ENCODE measurements at regions of chr9 and their contacts with region 1.

Region 1: DNA sequence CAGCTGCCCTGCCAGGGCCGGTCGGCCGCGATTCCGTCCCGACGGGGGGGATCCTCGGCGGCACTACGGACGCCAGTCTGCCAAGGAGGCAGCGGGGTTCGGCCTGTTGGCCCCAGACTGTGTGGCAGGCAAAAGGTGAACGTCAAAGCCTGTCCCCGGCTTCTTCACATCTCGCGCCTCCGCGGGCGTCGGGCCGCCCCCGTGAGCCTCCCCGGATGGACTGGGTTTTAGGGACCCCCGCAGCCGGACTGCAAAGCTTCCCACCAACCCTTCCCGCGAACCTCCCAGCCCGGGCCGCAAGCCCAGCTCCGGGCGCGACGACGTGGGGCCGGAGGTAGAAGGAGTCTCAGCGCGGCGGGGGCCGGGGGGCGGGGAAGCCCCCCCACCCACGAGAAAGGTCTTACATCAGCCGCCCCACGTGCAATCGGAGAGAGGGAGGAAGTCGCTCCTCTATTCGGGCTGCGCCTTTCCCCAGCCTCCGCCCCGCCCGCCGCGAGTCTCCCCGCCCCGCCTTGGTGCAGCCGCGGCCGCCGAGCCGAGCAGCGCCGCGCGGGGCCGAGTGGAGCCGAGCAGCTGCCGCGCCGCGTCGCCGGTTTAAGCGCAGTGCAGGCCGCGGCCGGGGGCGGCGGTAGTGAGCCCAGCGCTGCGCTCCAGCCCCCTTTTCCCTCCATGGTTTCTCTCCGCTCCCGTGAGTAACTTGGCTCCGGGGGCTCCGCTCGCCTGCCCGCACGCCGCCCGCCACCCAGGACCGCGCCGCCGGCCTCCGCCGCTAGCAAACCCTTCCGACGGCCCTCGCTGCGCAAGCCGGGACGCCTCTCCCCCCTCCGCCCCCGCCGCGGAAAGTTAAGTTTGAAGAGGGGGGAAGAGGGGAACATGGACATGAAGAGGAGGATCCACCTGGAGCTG is at the start of gene ANP32B:
- DNase-seq: peak; percentile 96
- H3K4me3 ChIP-seq: peak within 1 kb of the TSS; percentile 92
- H3K27ac ChIP-seq: peak within 1 kb of the TSS; percentile 85
- H3K4me1 ChIP-seq: peaks cover 66% of the 10 kb centered on the region
- CTCF ChIP-seq: peak; percentile 72
- total RNA-seq, gene ANP32B: 32.1 and 52.7 TPM in 2 replicates

Region 2: DNA sequence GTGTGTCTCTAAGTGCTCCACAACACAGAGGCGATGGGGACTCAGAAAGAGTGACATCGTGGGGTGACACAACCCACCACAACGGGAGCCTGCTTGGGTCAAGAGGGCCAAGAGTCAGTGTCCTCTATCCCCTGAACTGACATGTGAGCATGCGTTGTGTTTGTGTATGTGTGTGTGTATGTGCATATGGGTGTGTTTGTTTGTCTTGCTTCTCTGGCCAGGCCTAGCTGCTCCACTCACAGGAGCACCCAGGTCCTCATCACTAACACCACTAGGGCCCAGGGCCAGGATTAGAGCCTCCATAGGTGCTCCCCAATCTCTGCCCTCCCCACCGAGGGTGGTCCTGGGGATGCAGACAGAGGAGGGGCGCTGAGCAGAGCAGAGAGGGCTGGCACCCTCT is 829.0 kb before region 1 on chr9:
- CTCF ChIA-PET with region 1: no interaction called
- POLR2A ChIA-PET with region 1: no interaction called
- intact Hi-C with region 1: no loop called
- DNase-seq: no peak
- H3K4me3 ChIP-seq: no peak overlapping the region
- H3K27ac ChIP-seq: no peak overlapping the region
- H3K4me1 ChIP-seq: no peaks in the 10 kb centered on the region
- CTCF ChIP-seq: no peak

Region 3: GRCh38 chr9:97880336-97880735 is 102.6 kb before region 1 on chr9:
- CTCF ChIA-PET with region 1: no interaction called
- POLR2A ChIA-PET with region 1: no interaction called
- intact Hi-C with region 1: no loop called
- DNase-seq: no peak
- H3K4me3 ChIP-seq: no peak overlapping the region
- H3K27ac ChIP-seq: no peak overlapping the region
- H3K4me1 ChIP-seq: no peaks in the 10 kb centered on the region
- CTCF ChIP-seq: no peak

Region 4: DNA sequence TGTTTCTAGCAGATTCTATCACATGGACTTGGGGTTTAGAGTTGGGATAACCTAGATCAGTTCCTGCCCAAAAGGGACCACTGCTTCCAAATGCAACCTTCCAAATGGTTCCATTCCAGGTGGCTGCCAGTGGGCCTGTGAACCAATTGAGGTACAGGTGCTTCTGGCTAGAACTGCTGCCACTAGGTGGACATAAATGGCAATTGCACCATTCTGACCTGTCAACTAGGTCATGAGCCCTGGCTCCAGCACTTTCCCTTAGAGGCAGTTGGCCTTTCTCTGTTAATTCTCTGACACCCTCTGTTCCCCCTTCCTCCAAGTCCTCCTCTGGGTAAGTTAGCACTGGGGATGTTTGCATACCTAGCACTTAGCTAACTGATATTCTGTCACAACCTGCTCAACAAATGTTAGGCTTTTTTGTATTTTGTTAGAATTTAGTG is 28.4 kb before region 1 on chr9:
- CTCF ChIA-PET with region 1: interaction called, 3 read pairs
- POLR2A ChIA-PET with region 1: interaction called, 5 read pairs
- intact Hi-C with region 1: loop called (anchors 1 kb)
- DNase-seq: peak; percentile 90
- H3K4me3 ChIP-seq: no peak overlapping the region
- H3K27ac ChIP-seq: peak overlapping the region; percentile 7
- H3K4me1 ChIP-seq: peaks cover 26% of the 10 kb centered on the region
- CTCF ChIP-seq: peak; percentile 93

Region 5: DNA sequence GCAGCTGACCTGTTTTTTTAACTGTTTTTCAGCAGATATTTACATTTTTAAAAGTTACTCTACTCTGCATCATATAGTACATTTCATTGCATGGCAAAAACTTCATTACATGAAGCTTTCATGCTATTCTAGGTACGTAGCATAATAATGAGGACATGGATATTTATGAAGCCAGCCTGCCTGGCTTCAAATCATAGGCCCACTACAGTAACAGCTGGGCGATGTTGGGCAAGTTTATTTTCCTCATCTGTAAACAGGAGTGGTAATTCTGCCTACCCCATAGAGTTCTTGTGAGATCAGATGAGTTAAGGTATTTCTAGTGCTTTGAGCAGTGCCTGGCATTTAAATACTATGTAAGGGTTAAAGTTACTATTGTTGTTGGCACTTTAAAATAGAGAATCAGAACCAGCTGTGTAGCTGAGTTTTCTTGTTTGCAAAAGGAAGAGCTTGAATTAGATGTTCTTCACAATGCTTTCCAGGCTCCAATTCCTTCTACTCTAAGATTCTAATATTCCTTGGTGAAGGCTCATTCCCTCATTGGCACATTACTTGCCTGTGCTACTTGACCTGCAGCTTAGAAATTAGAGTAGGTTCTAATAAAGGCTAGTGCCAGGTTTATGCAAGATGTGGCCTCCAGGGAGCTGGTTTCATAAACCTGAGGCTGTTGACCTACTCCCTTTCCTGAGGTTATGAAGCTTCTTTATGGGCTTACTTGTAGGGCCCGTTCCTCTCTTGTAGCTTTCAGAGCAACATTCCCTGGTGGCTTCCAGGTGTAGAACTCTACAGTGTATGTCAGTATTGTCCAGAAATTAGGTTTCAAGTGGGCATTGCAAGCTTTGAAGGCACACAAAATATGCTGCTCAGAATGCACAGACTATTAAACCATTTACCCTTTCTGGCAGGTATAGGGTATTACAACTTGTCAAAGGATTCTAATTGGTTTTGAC is 14.7 kb after region 1 on chr9:
- CTCF ChIA-PET with region 1: no interaction called
- POLR2A ChIA-PET with region 1: interaction called, 10 read pairs
- intact Hi-C with region 1: no loop called
- DNase-seq: no peak
- H3K4me3 ChIP-seq: no peak overlapping the region
- H3K27ac ChIP-seq: no peak overlapping the region
- H3K4me1 ChIP-seq: peaks cover 10% of the 10 kb centered on the region
- CTCF ChIP-seq: no peak

Region 6: DNA sequence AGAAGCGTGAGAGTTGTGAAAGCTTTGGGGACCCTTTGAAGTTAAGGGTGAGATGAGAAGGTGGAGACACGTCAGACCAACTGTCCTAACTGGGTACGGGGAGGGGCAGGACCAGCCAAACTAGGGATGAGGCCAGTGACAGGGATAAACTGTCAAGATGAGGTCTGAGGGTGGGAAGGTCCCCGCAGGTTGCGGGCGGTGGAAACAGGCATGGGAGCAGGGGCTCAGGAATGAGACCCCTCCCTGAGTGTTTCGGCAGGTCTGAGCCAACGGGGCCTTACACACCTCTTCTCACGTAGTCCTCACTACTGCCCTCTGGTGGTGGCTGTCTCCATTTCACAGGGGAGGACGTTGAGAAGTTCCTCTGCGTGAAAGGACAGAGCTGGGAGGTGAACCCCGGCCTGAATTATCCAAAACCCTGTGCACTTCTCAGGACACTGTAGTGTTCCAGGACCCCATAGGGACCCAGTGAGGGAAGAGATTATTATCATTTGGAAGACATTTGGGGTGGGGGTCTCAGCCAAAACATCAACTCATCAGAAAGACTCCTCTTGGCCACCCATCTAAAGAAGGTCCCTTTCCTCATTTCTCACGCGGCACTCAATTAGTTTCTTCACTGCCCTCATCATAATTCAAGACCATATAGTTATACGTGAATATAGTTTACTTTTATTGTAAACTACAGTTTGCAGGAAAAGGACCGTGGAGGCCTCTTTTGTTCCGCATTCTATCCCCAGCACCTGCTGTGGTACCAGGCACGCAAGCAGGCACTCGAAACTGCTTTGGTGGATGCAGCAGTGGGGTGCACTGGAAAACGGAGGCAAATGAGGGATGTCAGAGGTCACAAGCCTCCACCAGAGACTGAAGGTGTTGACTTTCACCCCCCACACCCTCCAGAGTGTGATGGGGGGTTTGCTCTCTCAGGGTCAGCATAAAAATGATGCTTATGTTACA is 51.9 kb after region 1 on chr9:
- CTCF ChIA-PET with region 1: interaction called, 4 read pairs
- POLR2A ChIA-PET with region 1: interaction called, 4 read pairs
- intact Hi-C with region 1: loop called (anchors 1 kb)
- DNase-seq: peak; percentile 89
- H3K4me3 ChIP-seq: peak overlapping the region; percentile 34
- H3K27ac ChIP-seq: no peak overlapping the region
- H3K4me1 ChIP-seq: peaks cover 30% of the 10 kb centered on the region
- CTCF ChIP-seq: peak; percentile 91